Left cardiac atrium (tissue), 4 donors: ENCODE measurements at regions of chr1 and their contacts with region 1.

Region 1: GRCh38 chr1:23634842-23635651 is 56.6 kb upstream of the RPL11 start:
- DNase-seq: peak; percentile 59
- ATAC-seq: peak; percentile 69 to 79

Region 2: DNA sequence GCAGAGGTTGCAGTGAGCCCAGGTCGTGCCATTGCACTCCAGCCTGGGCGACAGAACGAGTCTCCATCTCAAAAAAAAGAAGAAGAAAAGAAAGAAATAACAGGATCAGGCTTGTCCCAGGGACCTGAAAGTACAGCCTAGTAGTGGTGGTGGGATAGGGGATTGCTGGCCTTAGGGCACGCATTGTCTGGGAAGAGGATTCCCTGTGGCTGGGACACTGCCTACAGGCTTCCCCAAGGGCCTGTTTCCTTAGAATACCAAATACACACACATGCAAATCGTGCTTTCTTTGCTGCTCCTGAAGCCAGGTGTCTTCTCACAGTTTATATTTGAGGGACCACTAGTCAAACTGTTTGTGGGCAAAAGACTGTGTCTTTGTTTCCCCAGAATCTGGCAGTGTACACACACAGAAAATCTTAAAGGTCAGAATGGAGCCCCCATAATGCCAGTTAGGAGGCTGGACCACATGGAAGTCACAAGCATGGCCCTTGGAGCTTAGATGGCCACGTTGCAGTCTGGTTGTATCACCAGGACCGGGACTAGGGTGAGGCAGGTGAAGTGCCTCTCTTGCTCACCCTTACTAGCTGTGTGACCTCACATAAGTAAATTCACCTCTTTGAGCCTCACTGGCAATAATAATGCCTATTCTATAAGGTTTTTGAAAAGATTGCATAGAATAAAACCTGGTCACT is 138.4 kb before region 1 on chr1:
- intact Hi-C with region 1: loop called in 1 of 2 experiments (anchors 5 kb)
- DNase-seq: no peak
- ATAC-seq: no peak

Region 3: DNA sequence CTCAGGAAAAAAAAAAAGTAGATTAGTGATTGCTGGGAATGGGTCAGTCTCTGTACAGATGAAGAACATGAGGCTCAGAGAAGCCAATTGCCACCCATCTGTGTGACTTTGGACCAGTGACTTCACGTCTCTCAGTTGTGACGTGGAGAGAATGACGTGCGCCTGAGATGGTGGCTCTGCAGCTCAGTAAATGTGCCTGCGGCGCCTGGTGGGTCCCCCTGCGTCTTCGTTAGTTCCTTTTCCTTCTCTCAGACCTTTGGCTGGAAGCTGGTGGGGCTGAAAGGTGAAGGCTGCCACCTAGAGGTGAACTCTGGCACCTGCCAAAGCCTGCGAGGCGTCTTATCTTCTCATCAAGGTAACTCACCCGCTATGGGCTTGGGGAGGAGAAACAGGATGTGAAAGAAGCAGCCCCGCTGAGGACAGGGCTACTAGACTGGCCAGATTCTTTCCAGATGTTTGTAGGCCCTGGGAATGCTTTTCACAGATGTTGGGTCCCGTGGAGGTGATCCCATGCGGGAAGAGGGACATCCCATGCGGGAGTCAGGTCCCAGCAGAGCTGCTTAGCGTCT is 95.3 kb before region 1 on chr1:
- intact Hi-C with region 1: loop called in 1 of 2 experiments (anchors 2 kb)
- DNase-seq: peak; percentile 84
- ATAC-seq: peak; percentile 87 to 93

Region 4: GRCh38 chr1:23691499-23692307 is 56.7 kb after region 1 on chr1 and contains the start of gene RPL11:
- intact Hi-C with region 1: no loop called
- DNase-seq: peak; percentile 95
- ATAC-seq: peak; percentile 99 to 100
- total RNA-seq, gene RPL11: 639 to 683 TPM

Region 5: GRCh38 chr1:24108334-24109165 is 473.5 kb after region 1 on chr1:
- intact Hi-C with region 1: no loop called
- DNase-seq: peak; percentile 68
- ATAC-seq: peak in 1 of 2 donors; percentile 46